Transverse colon (tissue), 4 donors: ENCODE measurements at regions of chr7 and their contacts with region 1.

Region 1: GRCh38 chr7:2729701-2730417 is 41.9 kb downstream of the AMZ1 start:
- DNase-seq: no peak
- H3K4me3 ChIP-seq: peak overlapping the region in 1 of 4 donors; percentile 10
- H3K27ac ChIP-seq: peak overlapping the region; percentile 69 to 86 (median 78)
- H3K4me1 ChIP-seq: peaks cover 11 to 41% (median 25%) of the 10 kb centered on the region in 4 donors
- H3K27me3 ChIP-seq: no peaks in the 10 kb centered on the region
- CTCF ChIP-seq: no peak
- EP300 ChIP-seq: peak; percentile 40
- POLR2A ChIP-seq: no peak

Region 2: DNA sequence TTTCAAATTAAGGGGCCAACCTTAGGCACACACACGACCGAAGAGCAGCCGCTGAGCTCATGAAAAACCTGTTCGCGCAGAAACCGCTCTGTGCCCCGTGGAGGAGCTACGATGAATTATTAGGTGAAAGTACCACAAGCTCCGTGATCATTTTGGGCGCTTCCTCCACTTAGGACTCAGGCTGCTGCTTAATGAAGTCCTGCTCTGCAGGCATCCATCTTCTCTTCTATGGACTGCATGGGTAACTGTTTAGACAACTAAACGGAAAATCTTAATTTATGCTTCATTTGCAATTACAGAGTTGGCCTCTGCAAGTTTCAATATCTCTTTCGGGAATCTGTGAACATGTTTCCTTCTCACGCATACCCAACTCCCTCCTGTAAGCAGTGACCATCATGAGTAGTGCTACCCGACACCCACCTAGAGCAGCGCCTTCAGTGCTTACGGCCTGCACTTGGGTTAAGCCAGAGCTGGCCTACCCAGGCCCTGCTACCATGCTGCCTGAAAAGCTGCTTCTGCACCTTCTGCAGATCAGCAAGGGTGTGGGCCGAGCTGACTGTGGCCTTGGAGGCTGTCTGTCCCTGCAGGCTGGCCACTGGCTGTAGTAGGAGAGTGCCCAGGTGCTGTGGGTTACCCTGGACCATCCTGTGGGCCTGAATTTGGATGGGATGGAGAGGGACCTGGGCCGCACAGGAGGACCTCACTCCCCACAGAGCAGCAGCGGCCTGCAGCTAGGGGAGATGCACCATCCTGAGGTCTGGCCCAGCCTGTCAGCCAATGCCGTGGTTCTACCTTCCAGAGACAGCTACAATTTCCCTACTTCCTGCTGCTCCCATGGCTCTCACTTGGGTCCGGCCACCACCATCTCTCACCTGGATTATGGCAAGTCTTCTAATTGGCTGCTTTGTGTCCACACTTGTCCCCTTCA is 78.2 kb after region 1 on chr7:
- in situ Hi-C with region 1: no loop called
- intact Hi-C with region 1: loop called (anchors 2 kb)
- DNase-seq: no peak
- H3K4me3 ChIP-seq: no peak overlapping the region
- H3K27ac ChIP-seq: no peak overlapping the region
- H3K4me1 ChIP-seq: peaks cover 5 to 25% (median 8%) of the 10 kb centered on the region in 4 donors
- H3K27me3 ChIP-seq: no peaks in the 10 kb centered on the region
- CTCF ChIP-seq: no peak
- EP300 ChIP-seq: no peak
- POLR2A ChIP-seq: no peak

Region 3: GRCh38 chr7:4200592-4200991 is 1470.7 kb after region 1 on chr7:
- in situ Hi-C with region 1: no loop called
- intact Hi-C with region 1: no loop called
- DNase-seq: no peak
- H3K4me3 ChIP-seq: no peak overlapping the region
- H3K27ac ChIP-seq: no peak overlapping the region
- H3K4me1 ChIP-seq: no peaks in the 10 kb centered on the region
- H3K27me3 ChIP-seq: no peaks in the 10 kb centered on the region
- CTCF ChIP-seq: no peak
- EP300 ChIP-seq: no peak
- POLR2A ChIP-seq: no peak